Aorta (tissue), 5 donors: ENCODE measurements at regions of chr4 and their contacts with region 1.

Region 1: GRCh38 chr4:72974694-72975487 is 94.6 kb downstream of the COX18 start:
- DNase-seq: no peak
- ATAC-seq: no peak
- H3K4me3 ChIP-seq: no peak overlapping the region
- H3K27ac ChIP-seq: peak overlapping the region; percentile 76 to 77
- H3K4me1 ChIP-seq: peaks cover 6 to 8% of the 10 kb centered on the region in 2 donors
- H3K27me3 ChIP-seq: no peaks in the 10 kb centered on the region

Region 2: GRCh38 chr4:72390409-72390808 is 584.5 kb before region 1 on chr4:
- intact Hi-C with region 1: no loop called
- DNase-seq: no peak
- ATAC-seq: peak; percentile 23
- H3K4me3 ChIP-seq: no peak overlapping the region
- H3K27ac ChIP-seq: no peak overlapping the region
- H3K4me1 ChIP-seq: peaks cover 0 to 2% of the 10 kb centered on the region in 2 donors
- H3K27me3 ChIP-seq: no peaks in the 10 kb centered on the region

Region 3: GRCh38 chr4:72817012-72817411 is 157.9 kb before region 1 on chr4:
- intact Hi-C with region 1: loop called in 1 of 2 experiments (anchors 10 kb)
- DNase-seq: peak in 1 of 2 donors; percentile 44
- ATAC-seq: no peak
- H3K4me3 ChIP-seq: no peak overlapping the region
- H3K27ac ChIP-seq: peak overlapping the region; percentile 3 to 67
- H3K4me1 ChIP-seq: peaks cover 3% of the 10 kb centered on the region in 2 donors
- H3K27me3 ChIP-seq: no peaks in the 10 kb centered on the region

Region 4: DNA sequence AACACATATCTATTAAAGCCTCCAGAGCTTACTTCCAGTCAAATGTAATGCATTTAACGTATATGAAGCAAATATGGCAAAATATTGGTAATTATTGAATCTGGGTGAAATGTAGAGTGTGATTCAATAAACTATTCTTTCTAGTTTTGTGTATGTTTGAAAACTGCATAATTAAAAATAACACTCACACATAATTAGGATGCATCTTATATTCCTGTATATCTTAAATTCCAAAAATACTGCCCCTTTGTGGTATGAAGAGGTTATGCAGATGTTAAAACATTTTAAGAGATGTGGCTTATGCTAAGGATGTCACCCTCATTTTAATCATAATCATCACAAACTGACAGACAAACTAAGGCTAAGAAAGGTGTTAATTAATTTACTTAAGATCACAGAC is 88.3 kb before region 1 on chr4:
- intact Hi-C with region 1: loop called in 1 of 2 experiments (anchors 5 kb)
- DNase-seq: no peak
- ATAC-seq: no peak
- H3K4me3 ChIP-seq: no peak overlapping the region
- H3K27ac ChIP-seq: no peak overlapping the region
- H3K4me1 ChIP-seq: no peaks in the 10 kb centered on the region
- H3K27me3 ChIP-seq: no peaks in the 10 kb centered on the region

Region 5: GRCh38 chr4:72896515-72896914 is 78.4 kb before region 1 on chr4:
- intact Hi-C with region 1: loop called in 1 of 2 experiments (anchors 5 kb)
- DNase-seq: no peak
- ATAC-seq: peak; percentile 92
- H3K4me3 ChIP-seq: no peak overlapping the region
- H3K27ac ChIP-seq: peak overlapping the region in 1 of 2 donors; percentile 76
- H3K4me1 ChIP-seq: peaks cover 2 to 10% of the 10 kb centered on the region in 2 donors
- H3K27me3 ChIP-seq: no peaks in the 10 kb centered on the region